Endothelial cell of umbilical vein (primary cell): ENCODE measurements at regions of chr7 and their contacts with region 1.

Region 1: DNA sequence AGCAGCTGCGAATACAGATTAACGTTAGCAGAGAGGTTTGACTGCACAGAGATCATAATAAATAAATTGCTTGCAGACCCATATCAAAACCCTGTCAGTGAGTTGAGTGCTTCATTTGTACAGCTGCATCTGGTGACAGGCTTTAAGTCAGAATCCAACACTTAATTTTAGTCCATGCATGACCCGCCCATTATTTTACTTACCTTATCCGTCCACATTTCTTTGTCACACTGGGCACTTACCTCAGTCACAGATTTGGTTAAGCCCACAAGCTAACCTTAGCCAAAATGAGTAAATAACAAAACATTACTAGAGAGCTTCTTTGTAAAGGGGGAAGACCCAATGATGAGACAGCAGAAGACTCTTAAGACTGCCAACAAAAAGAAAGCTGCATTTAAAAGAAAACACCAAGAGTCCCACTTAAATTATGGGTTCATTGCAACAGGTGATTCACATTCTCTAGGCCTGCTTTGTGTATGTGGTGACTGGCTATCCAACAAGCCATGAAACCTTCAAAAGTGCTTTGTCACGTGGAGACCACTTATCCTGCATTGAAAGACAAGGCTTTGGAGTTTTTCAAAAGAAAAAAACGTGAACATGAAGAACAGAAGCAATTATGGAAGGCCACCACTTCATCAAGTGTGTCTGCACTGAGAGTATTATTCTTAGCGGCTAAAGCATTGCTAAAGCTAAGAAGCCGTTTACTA is 32.2 kb downstream of the PHTF2 start:
- DNase-seq: no peak
- H3K4me3 ChIP-seq: no peak overlapping the region
- H3K27ac ChIP-seq: no peak overlapping the region
- H3K4me1 ChIP-seq: peaks cover 18% of the 10 kb centered on the region
- H3K27me3 ChIP-seq: no peaks in the 10 kb centered on the region
- CTCF ChIP-seq: no peak
- POLR2A ChIP-seq: no peak

Region 2: GRCh38 chr7:77727936-77728701 is 102.7 kb before region 1 on chr7:
- CTCF ChIA-PET with region 1: no interaction called
- POLR2A ChIA-PET with region 1: no interaction called
- dilution Hi-C with region 1: no loop called
- intact Hi-C with region 1: no loop called
- DNase-seq: peak; percentile 67
- H3K4me3 ChIP-seq: no peak overlapping the region
- H3K27ac ChIP-seq: no peak overlapping the region
- H3K4me1 ChIP-seq: peaks cover 7% of the 10 kb centered on the region
- H3K27me3 ChIP-seq: no peaks in the 10 kb centered on the region
- CTCF ChIP-seq: no peak
- POLR2A ChIP-seq: no peak

Region 3: DNA sequence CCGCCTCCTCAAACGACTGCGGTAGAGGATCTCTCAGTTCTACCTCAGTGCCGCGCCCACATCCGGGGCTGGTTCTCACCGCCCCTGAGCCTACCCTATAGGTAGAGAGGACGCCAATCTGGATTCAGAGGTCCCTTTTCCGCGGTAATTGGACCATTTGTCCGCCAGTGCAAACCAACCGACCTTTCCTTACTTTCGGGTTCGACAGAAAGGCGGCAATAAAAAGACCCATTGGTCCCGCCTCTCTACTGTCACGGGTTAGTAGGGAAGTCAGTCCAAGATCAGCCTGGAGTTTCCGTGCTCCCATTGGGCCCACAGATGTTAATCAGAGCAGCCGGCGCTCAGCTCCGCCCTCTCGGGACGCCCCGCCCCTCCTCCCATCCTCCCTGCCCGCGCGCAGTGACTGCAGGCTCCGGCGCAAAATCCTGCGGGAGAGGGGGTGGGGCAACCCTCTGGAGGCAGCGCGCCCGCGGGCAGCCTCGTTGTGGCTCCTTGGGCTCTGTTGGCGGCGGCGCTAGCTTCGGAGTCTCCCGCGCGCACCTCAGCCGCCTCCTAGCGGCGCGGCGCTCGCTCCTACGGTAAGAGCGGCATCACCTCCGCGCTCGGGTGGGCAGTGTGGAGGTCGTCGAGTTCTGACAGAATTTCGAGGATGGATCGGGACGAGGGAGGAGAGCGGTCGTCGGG is 32.3 kb before region 1 on chr7 and contains the starts of genes PHTF2 and TMEM60:
- CTCF ChIA-PET with region 1: interaction called, 11 read pairs
- POLR2A ChIA-PET with region 1: no interaction called
- dilution Hi-C with region 1: no loop called
- intact Hi-C with region 1: loop called (anchors 1 kb)
- DNase-seq: peak; percentile 100
- H3K4me3 ChIP-seq: peak within 1 kb of the TSS; percentile 70 to 94 (median 90)
- H3K27ac ChIP-seq: peak within 1 kb of the TSS; percentile 66
- H3K4me1 ChIP-seq: peaks cover 31% of the 10 kb centered on the region
- H3K27me3 ChIP-seq: no peaks in the 10 kb centered on the region
- CTCF ChIP-seq: peak; percentile 41 to 73
- POLR2A ChIP-seq: peak; percentile 15
- total RNA-seq, gene PHTF2: 21.4 TPM in 2 replicates
- total RNA-seq, gene TMEM60: 15.0 and 15.8 TPM in 2 replicates

Region 4: GRCh38 chr7:77812290-77812685 is 18.5 kb before region 1 on chr7:
- CTCF ChIA-PET with region 1: interaction called, 5 read pairs
- POLR2A ChIA-PET with region 1: no interaction called
- dilution Hi-C with region 1: no loop called
- intact Hi-C with region 1: loop called (anchors 1 kb)
- DNase-seq: no peak
- H3K4me3 ChIP-seq: no peak overlapping the region
- H3K27ac ChIP-seq: peak overlapping the region; percentile 55
- H3K4me1 ChIP-seq: peaks cover 9% of the 10 kb centered on the region
- H3K27me3 ChIP-seq: no peaks in the 10 kb centered on the region
- CTCF ChIP-seq: no peak
- POLR2A ChIP-seq: no peak

Region 5: DNA sequence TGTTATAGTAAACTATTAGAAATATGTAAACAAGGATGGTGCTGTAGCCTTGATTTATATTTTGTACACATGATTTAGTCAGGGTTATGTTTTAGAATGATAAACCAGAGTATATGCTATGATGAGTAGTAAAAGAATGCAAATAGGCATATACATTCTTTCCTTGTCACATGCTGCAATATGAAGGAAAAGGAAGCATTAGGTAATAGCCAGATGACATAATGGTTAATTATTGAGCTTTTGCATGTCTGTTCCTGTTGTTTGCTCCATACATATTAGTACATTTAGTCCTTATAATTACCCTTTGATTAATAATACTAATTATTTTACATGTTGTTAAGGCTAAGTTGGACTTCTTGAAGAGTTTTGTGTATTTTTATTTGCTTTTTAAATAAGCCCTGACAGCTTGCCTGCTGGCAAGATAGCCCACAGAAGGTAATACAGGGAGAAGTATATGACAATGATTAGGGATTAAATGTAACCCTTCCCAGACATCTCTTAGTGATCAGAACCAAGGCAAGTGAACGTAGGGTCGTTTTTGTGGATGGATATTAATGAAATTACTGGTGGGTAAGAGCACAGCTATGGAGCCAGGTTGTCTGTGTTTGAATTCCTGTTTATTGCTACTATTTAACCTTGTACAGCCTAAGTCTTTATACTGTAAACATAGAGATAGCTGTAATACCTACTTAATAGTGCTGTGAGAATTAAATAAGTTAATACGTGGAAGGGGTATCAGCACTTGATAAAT is 36.2 kb after region 1 on chr7:
- CTCF ChIA-PET with region 1: interaction called, 8 read pairs
- POLR2A ChIA-PET with region 1: interaction called, 4 read pairs
- dilution Hi-C with region 1: no loop called
- intact Hi-C with region 1: loop called (anchors 1 kb)
- DNase-seq: peak; percentile 79
- H3K4me3 ChIP-seq: no peak overlapping the region
- H3K27ac ChIP-seq: peak overlapping the region; percentile 95
- H3K4me1 ChIP-seq: peaks cover 18% of the 10 kb centered on the region
- H3K27me3 ChIP-seq: no peaks in the 10 kb centered on the region
- CTCF ChIP-seq: no peak
- POLR2A ChIP-seq: no peak

Region 6: GRCh38 chr7:77887567-77887966 is 56.8 kb after region 1 on chr7:
- CTCF ChIA-PET with region 1: no interaction called
- POLR2A ChIA-PET with region 1: no interaction called
- dilution Hi-C with region 1: no loop called
- intact Hi-C with region 1: no loop called
- DNase-seq: peak; percentile 30
- H3K4me3 ChIP-seq: no peak overlapping the region
- H3K27ac ChIP-seq: no peak overlapping the region
- H3K4me1 ChIP-seq: no peaks in the 10 kb centered on the region
- H3K27me3 ChIP-seq: no peaks in the 10 kb centered on the region
- CTCF ChIP-seq: no peak
- POLR2A ChIP-seq: no peak

Region 7: DNA sequence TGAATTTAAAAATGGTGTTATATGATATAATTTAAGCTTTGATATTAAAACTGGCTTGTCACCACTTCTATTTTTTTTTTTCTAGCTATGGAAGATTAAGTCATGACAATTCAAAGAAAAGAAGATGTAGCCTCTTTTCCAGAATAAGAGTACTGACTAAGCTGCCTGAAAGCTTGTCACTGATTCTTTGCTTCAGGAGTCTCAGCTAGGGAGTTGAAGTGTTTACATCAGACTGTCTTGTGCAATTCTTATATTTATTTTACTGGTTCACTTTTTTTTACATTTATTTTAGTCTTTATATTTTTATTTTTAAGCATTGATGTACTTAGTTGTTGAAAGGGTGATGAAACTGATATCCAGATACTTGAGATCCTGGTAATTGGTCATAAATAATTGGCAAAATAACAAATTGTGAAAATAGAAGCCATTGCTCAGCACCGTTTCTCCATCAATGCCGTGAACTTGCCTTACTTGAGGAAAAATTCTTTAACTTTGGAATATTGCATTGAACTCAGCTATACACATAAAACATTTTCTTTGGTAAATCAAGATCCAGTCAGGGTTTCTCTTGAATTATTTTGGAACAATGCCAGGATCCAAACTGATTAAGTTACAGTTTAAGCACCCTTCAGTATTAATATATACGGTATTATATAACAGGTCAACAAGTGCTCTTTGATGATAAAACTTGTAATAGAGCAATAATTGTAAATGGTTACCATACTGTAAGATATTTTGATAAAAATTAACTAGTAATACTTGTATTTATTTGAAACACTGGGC is 124.2 kb after region 1 on chr7:
- CTCF ChIA-PET with region 1: no interaction called
- POLR2A ChIA-PET with region 1: no interaction called
- dilution Hi-C with region 1: no loop called
- intact Hi-C with region 1: no loop called
- DNase-seq: no peak
- H3K4me3 ChIP-seq: no peak overlapping the region
- H3K27ac ChIP-seq: no peak overlapping the region
- H3K4me1 ChIP-seq: no peaks in the 10 kb centered on the region
- H3K27me3 ChIP-seq: no peaks in the 10 kb centered on the region
- CTCF ChIP-seq: no peak
- POLR2A ChIP-seq: no peak